ENCODE measurements at regions of chr16 and their contacts with region 1.

Region 1: DNA sequence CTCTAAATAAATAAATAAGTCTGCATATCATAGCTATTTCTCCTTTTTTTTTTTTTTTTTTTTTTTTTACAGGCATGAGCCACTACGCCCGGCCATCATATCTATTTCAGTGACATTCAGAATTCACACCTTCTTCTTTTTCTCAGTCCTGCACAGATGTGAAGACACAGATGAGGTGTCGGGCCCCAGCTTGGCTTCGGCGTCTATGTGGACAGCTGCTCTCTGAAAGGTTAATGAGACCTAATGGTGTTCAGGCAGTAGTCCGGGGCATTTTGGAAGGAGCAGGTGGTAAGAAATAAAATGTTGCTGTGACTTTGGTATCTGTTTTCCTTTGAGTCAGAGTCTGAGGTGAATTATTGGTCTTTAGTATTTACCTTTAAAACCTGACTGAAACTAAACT is 23.6 kb downstream of the TANGO6 start:
- DNase-seq: no peak
- H3K4me3 ChIP-seq: no peak overlapping the region
- H3K27ac ChIP-seq: no peak overlapping the region
- H3K4me1 ChIP-seq: no peaks in the 10 kb centered on the region
- H3K27me3 ChIP-seq: no peaks in the 10 kb centered on the region
- CTCF ChIP-seq: no peak

Region 2: GRCh38 chr16:68590201-68590994 is 276.5 kb before region 1 on chr16:
- CTCF ChIA-PET with region 1: no interaction called
- POLR2A ChIA-PET with region 1: no interaction called
- intact Hi-C with region 1: no loop called
- DNase-seq: peak; percentile 46 to 79
- H3K4me3 ChIP-seq: no peak overlapping the region
- H3K27ac ChIP-seq: no peak overlapping the region
- H3K4me1 ChIP-seq: no peaks in the 10 kb centered on the region
- H3K27me3 ChIP-seq: no peaks in the 10 kb centered on the region
- CTCF ChIP-seq: peak; percentile 92

Region 3: DNA sequence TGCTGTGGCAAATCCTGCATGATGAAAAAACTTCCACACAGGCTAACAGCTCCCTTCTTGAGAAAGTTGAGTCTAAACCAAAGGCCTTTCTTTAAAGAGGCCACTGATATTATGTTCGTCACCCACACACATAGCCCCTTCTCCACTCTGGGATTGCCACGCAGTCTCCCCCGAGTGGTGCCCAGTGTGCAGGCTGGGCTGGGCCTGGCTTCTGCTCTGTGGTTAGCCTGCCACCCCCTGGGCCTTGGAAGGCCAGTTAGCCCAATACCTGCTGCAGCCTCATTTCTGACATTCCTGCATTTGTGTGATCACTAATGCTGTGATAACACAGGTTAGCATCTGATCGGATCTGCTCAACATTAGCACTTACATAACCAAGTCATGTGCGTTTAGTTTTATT is 177.0 kb before region 1 on chr16:
- CTCF ChIA-PET with region 1: no interaction called
- POLR2A ChIA-PET with region 1: no interaction called
- intact Hi-C with region 1: no loop called
- DNase-seq: no peak
- H3K4me3 ChIP-seq: no peak overlapping the region
- H3K27ac ChIP-seq: no peak overlapping the region
- H3K4me1 ChIP-seq: no peaks in the 10 kb centered on the region
- H3K27me3 ChIP-seq: no peaks in the 10 kb centered on the region
- CTCF ChIP-seq: no peak

Region 4: DNA sequence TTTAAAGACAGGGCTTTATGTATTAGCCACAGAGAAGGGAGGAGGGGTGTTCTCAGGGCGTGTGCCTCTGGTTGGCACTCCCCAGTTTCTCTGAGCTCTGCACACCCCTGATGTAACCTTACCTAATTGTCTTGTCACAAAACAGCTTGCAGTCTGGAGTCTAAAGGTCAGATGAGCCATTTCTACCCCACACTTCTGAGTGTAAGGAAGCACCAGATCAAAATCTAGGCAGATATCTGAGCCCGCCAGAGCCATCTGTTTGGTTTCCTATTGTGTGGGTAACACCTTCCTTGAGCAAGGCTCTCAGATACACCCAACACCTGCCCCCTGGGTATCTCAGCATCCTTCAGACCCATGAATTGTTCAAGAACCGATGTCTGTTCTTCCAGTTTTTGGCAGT is 114.3 kb before region 1 on chr16:
- CTCF ChIA-PET with region 1: no interaction called
- POLR2A ChIA-PET with region 1: no interaction called
- intact Hi-C with region 1: no loop called
- DNase-seq: no peak
- H3K4me3 ChIP-seq: no peak overlapping the region
- H3K27ac ChIP-seq: peak overlapping the region; percentile 55
- H3K4me1 ChIP-seq: peaks cover 73% of the 10 kb centered on the region
- H3K27me3 ChIP-seq: no peaks in the 10 kb centered on the region
- CTCF ChIP-seq: no peak

Region 5: DNA sequence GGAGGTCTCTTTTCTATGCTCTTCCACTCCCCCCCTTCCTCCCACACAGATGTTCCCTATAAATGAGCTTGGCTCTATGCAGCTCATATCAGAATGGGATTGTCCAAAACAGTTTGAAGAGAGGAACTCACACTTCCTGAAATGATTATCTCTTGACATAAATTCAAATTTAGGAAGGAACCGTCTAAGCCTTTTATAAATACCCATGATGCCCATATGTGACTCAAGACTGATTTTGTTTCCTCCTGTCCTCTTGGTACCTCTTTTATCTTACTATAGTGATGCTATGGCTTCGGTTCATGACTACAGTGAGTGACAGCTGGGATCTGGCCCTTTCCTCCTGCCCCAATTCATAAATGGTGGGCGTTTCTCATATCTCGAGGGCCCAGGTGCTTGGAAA is 535.5 kb after region 1 on chr16:
- CTCF ChIA-PET with region 1: no interaction called
- POLR2A ChIA-PET with region 1: interaction called, 21 read pairs
- intact Hi-C with region 1: no loop called
- DNase-seq: no peak
- H3K4me3 ChIP-seq: no peak overlapping the region
- H3K27ac ChIP-seq: 0 out of 2 replicates have a peak overlapping the region, but pooled peaks have one; percentile 88
- H3K4me1 ChIP-seq: peaks cover 71% of the 10 kb centered on the region
- H3K27me3 ChIP-seq: no peaks in the 10 kb centered on the region
- CTCF ChIP-seq: no peak

Measured in PC-9 (cell line).